Sigmoid colon (tissue), 7 donors: ENCODE measurements at regions of chr17 and their contacts with region 1.

Region 1: GRCh38 chr17:27654654-27655524 is 23.9 kb downstream of the LGALS9 start:
- DNase-seq: peak; percentile 79
- H3K4me3 ChIP-seq: no peak overlapping the region
- H3K27ac ChIP-seq: no peak overlapping the region
- H3K4me1 ChIP-seq: no peaks in the 10 kb centered on the region
- H3K27me3 ChIP-seq: no peaks in the 10 kb centered on the region
- CTCF ChIP-seq: peak; percentile 36 to 86 (median 76)
- EP300 ChIP-seq: no peak
- POLR2A ChIP-seq: no peak

Region 2: GRCh38 chr17:27236717-27237315 is 418.1 kb before region 1 on chr17:
- intact Hi-C with region 1: loop called (anchors 5 kb)
- DNase-seq: peak; percentile 87
- H3K4me3 ChIP-seq: no peak overlapping the region
- H3K27ac ChIP-seq: no peak overlapping the region
- H3K4me1 ChIP-seq: peaks cover 0 to under 1% (median 0%) of the 10 kb centered on the region in 4 donors
- H3K27me3 ChIP-seq: no peaks in the 10 kb centered on the region
- CTCF ChIP-seq: peak; percentile 71 to 95 (median 92)
- EP300 ChIP-seq: no peak
- POLR2A ChIP-seq: no peak

Region 3: DNA sequence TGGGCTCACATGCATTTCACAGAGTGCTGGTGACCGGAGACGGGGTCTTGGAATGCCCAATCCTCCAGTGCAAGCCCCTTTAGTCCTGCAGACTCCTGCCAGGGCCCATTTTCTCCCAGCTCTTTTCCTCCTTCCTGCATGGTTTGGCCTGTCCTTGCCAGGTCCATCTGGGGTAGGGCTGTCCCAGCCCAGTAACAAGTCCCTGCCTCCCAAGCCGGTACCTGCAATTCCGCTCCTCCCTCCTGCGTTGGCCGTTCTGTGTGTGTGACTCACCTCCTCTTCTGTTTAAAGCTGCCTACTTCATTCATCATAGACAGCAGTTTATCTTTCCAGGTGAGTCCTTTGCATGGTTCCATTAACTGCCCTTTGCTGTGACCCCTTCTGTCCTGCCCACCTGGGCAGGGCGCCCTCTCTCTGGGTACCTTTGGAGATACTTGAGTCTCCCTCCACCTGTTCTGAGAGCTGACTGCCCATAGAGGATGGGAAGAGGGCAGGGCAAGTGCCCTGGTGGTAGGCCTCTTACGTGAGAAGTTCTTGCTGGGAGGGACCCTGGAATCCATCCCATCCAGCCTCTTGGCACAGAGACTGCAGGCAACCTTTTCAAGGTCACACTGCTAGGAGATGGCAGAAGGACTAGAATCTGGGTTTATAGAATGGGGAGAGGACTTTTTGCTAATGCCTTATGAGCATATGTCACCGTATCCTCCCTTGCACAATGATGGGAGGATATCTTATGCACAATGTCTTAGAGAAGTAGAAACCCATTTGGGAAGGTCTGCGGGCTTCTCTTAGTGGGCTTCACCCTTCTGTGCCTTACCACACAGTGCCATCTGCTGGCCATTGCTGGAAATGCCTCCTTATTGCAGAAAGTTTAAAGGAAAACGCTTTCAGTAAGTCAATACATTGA is 53.6 kb before region 1 on chr17:
- intact Hi-C with region 1: loop called (anchors 1 kb)
- DNase-seq: peak; percentile 87
- H3K4me3 ChIP-seq: no peak overlapping the region
- H3K27ac ChIP-seq: no peak overlapping the region
- H3K4me1 ChIP-seq: peaks cover 0 to 13% (median 3%) of the 10 kb centered on the region in 4 donors
- H3K27me3 ChIP-seq: no peaks in the 10 kb centered on the region
- CTCF ChIP-seq: peak; percentile 85 to 95 (median 86)
- EP300 ChIP-seq: no peak
- POLR2A ChIP-seq: no peak

Region 4: GRCh38 chr17:27630607-27631410 is 24.1 kb before region 1 on chr17 and contains the start of gene LGALS9:
- intact Hi-C with region 1: no loop called
- DNase-seq: no peak
- H3K4me3 ChIP-seq: peak within 1 kb of the TSS in 3 of 4 donors; percentile 31 to 41 (median 31)
- H3K27ac ChIP-seq: peak within 1 kb of the TSS; percentile 56 to 69 (median 62)
- H3K4me1 ChIP-seq: peaks cover 0 to 24% (median 23%) of the 10 kb centered on the region in 4 donors
- H3K27me3 ChIP-seq: no peaks in the 10 kb centered on the region
- CTCF ChIP-seq: no peak
- EP300 ChIP-seq: no peak
- POLR2A ChIP-seq: peak in 1 of 2 donors; percentile 63
- total RNA-seq, gene LGALS9: 17.8 to 33.2 (median 22.2) TPM

Region 5: DNA sequence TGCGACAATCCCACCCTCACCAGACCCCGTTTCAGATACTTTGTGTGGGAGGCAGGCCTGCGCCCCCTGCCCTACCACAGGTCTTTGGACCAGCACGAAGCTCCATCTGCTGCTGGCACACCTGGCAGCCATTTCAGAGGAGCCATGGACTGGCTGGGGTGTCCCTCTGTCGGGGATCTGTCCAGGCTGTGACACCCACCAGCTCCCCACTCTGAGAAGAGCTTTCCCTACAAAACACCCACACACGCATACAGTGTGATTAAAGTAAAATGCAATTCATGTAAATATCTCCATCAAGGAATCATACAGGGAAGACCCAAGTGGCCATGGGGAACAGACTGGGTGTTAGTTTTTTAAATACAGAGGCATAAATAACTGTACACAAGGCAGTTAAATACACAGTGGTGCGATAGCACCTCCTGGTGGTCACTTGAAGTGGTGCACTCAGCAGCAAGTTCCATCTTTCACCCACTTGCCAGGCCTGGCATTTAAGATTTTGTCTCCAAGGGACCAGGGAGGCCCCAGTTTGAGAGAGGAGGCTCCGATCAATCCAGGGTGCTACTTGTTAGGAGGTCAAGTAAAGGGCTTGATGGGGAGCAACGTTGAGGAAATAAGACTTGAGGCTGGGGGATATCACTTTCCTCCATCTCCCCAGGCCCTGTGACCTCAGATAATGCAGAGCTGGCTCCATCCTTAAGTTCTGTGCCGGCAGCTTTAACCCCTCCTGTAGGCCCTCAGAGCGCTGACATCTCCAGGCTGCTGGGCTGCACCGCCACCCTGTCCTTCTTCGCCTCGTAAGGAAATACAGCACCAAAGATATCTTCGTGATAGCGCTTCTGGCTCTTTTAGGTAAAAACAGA is 101.9 kb after region 1 on chr17:
- intact Hi-C with region 1: loop called (anchors 2 kb)
- DNase-seq: no peak
- H3K4me3 ChIP-seq: no peak overlapping the region
- H3K27ac ChIP-seq: no peak overlapping the region
- H3K4me1 ChIP-seq: no peaks in the 10 kb centered on the region
- H3K27me3 ChIP-seq: no peaks in the 10 kb centered on the region
- CTCF ChIP-seq: peak; percentile 30 to 79 (median 72)
- EP300 ChIP-seq: no peak
- POLR2A ChIP-seq: no peak

Region 6: DNA sequence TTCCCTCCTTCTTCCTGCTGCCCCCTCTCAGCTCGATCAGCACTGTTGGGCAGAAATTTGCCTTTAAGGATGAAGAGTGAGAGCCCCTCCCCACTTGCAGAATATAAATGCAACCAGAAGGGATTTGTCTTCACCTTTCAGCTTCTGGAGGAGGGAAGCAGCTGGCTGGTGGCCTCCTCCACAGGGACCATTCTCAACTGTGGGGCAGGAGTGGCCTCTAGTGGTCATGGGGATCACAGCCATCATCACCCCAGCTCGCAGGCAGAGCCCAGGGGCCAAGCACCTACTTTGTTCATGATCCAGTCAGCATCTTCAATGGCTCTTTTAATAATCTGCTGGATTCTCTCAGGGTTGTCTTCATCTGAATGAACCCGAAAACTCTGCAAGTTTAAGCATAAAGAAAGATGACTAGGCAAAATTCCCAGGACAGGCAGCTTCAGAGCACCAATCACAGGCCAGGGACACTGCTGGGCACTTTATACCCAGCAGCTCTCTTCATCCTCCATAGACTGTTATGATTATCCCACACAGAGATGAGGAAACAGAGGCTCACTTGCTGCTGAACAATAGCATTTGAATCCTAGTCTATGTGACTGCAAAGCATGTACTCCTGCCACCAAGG is 225.2 kb after region 1 on chr17:
- intact Hi-C with region 1: loop called (anchors 5 kb)
- DNase-seq: peak; percentile 77
- H3K4me3 ChIP-seq: no peak overlapping the region
- H3K27ac ChIP-seq: no peak overlapping the region
- H3K4me1 ChIP-seq: no peaks in the 10 kb centered on the region
- H3K27me3 ChIP-seq: no peaks in the 10 kb centered on the region
- CTCF ChIP-seq: peak; percentile 38 to 55 (median 50)
- EP300 ChIP-seq: no peak
- POLR2A ChIP-seq: no peak